ENCODE measurements at regions of chr14 and their contacts with region 1.

Region 1: DNA sequence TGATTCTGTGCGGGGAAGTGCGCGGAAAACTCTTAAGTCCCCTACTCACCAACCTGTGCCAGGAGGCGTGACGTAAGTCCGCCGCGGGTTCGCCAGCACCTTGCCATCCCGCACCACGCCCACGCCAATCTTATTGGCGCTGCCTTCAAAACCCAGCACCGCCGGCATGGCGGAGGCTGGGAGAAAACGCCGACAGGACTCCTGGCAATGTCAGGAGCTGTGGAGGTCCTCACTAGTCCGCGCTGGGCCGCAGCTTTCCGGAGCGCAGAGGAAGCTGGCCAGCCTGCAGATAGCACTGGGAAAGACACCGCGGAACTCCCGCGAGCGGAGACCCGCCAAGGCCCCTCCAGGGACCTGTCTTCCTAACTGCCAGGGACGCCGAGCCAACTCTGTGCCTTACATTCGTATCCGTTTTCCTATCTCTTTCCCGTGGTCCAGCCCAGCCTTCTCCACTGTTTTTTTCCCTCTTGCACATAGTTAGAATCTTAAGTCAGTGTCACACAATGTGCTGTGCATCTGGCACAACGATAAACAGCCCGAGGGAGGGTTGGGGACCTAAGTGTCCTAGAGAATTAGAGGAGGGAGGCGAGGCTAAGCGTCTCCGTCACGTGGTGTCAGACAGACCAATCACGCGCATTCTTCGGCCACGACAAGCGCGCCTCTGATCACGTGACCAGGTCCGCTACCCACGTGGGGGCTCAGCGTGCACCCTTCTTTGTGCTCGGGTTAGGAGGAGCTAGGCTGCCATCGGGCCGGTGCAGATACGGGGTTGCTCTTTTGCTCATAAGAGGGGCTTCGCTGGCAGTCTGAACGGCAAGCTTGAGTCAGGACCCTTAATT is at the starts of genes APEX1 and OSGEP:
- DNase-seq: peak; percentile 91 to 92
- H3K4me3 ChIP-seq: peak within 1 kb of the TSS; percentile 77
- H3K27ac ChIP-seq: peak within 1 kb of the TSS; percentile 72
- H3K4me1 ChIP-seq: peaks cover 16% of the 10 kb centered on the region
- H3K27me3 ChIP-seq: no peaks in the 10 kb centered on the region
- CTCF ChIP-seq: no peak
- total RNA-seq, gene APEX1: 107 and 113 TPM in 2 replicates
- total RNA-seq, gene OSGEP: 17.2 and 20.6 TPM in 2 replicates

Region 2: DNA sequence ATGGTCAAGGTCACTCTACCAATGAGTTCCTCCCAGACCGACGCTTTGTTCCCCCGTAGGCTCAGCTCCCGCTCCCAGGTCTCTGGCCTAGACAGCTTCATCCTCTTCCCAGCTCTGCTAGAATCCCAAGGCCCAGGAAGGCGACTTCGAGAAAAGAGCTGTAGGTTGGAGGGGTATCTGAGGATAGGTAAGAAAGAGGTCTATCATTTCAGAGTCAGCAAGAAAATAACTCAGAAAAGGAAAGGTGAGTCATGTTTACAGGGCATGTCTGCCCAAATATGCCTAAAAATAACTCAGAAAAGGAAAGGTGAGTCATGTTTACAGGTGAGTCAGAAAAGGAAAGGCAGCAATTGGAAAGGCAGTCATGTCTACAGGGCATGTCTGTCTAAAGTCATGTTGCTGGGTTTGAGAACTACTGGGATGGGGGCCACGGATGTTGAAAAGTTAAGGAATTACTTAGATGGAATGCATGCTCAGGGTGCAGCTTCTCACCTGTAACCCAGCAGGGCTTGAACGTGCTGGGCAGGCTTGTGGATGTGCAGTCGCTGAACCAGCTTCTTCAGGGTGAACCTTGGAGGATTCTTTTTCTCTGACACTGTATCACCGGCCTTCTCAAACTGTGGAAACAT is 53.7 kb before region 1 on chr14:
- CTCF ChIA-PET with region 1: no interaction called
- POLR2A ChIA-PET with region 1: no interaction called
- intact Hi-C with region 1: loop called (anchors 2 kb)
- DNase-seq: peak; percentile 55 to 91
- H3K4me3 ChIP-seq: peak overlapping the region; percentile 26; the same call in 1 of the 2 replicates
- H3K27ac ChIP-seq: peak overlapping the region; percentile 85
- H3K4me1 ChIP-seq: peaks cover 26% of the 10 kb centered on the region
- H3K27me3 ChIP-seq: no peaks in the 10 kb centered on the region
- CTCF ChIP-seq: no peak

Region 3: DNA sequence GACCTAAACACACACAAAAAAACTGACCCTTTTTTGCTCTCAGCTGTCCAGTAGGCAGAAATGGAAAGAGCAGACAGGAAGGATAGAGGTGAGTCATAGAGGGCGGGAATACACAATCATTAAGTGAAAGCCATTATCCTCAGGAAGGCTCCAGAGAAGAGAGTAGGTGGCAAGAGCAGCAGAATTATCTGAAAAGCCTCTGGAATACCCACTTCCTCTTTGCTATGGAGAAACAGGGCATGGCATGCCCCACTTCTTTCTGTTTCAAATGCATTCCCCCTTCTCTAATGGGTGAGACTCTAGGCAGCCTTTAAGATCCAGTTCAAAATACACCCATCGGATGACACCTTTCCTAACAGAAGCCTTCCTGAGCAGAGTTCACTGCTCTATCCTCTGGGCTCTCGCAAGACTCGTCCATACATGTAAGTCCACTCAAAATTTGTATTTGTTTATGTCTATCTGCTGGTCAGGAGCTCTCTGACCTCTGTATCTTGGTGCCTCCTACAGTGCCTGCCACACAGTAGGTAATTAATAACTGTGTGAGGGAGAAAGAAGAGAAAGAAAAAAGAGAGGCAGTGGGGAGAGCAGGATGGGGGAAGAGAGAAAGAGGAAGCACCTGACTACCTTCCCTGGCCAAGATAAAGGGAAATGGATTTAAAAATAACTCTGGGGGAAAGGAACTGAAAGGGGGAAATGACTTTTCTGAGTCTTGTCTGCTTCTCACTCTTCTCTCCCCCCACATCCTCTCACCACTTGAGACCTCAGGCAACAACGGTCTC is 27.3 kb before region 1 on chr14:
- CTCF ChIA-PET with region 1: no interaction called
- POLR2A ChIA-PET with region 1: no interaction called
- intact Hi-C with region 1: no loop called
- DNase-seq: no peak
- H3K4me3 ChIP-seq: no peak overlapping the region
- H3K27ac ChIP-seq: no peak overlapping the region
- H3K4me1 ChIP-seq: 0 out of 2 replicates have a peak, but pooled peaks cover 3% of the 10 kb centered on the region
- H3K27me3 ChIP-seq: no peaks in the 10 kb centered on the region
- CTCF ChIP-seq: no peak

Region 4: DNA sequence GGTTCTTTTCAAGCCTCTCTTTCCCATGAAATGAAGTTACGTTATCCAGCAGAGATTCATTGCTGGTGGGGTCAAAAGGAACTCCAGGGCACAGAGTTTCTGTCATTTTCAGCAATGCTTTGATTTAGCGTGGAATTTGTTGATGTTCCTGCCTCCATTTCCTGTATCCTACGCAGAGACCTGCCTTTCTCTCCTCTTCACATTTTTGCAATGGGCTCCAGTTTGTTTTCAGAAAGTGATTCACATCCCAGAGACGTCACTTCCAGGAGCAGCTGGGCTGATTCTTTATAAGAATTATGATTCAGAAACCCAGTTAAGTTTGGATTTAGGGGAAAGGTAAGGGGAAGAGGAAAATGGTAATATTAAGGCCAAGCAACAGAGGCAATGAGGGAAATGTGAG is 62.2 kb after region 1 on chr14:
- CTCF ChIA-PET with region 1: no interaction called
- POLR2A ChIA-PET with region 1: no interaction called
- intact Hi-C with region 1: no loop called
- DNase-seq: no peak
- H3K4me3 ChIP-seq: no peak overlapping the region
- H3K27ac ChIP-seq: no peak overlapping the region
- H3K4me1 ChIP-seq: no peaks in the 10 kb centered on the region; the same call in 1 of the 2 replicates
- H3K27me3 ChIP-seq: no peaks in the 10 kb centered on the region
- CTCF ChIP-seq: no peak

Region 5: DNA sequence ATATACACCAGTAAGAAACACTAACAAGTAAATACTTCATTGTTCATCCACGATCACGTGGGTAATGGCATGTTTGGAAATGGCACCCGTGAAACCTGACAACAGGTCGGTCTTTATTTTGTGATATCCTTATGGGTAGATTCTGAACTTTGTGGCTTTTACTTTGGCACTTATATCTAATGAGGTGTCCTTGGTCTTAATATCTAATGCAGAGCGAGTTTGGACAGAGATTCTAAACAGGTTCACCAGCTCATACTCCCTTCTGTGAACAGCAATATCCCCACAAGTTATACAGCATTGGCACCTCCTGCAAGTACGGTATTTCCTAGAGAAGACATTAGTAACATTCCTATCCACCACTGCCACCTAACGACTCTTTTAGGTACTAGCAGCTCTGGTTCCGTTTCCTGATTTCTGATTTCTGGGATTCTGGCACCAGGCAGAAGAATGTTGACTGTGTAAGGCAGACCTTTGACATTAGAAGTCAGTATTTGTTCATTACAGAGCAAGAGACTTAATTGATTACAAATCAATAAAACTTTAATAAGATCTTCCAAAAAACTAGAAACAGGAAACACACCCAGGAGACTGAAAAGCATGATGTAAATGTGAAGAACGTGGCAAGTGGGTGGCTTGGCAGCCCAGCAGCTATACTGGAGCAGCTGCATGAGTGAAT is 236.3 kb after region 1 on chr14:
- CTCF ChIA-PET with region 1: no interaction called
- POLR2A ChIA-PET with region 1: no interaction called
- intact Hi-C with region 1: no loop called
- DNase-seq: peak; percentile 29 to 53
- H3K4me3 ChIP-seq: no peak overlapping the region
- H3K27ac ChIP-seq: no peak overlapping the region
- H3K4me1 ChIP-seq: no peaks in the 10 kb centered on the region
- H3K27me3 ChIP-seq: no peaks in the 10 kb centered on the region
- CTCF ChIP-seq: peak; percentile 79